Heart left ventricle (tissue), 16 donors: ENCODE measurements at regions of chr17 and their contacts with region 1.

Region 1: DNA sequence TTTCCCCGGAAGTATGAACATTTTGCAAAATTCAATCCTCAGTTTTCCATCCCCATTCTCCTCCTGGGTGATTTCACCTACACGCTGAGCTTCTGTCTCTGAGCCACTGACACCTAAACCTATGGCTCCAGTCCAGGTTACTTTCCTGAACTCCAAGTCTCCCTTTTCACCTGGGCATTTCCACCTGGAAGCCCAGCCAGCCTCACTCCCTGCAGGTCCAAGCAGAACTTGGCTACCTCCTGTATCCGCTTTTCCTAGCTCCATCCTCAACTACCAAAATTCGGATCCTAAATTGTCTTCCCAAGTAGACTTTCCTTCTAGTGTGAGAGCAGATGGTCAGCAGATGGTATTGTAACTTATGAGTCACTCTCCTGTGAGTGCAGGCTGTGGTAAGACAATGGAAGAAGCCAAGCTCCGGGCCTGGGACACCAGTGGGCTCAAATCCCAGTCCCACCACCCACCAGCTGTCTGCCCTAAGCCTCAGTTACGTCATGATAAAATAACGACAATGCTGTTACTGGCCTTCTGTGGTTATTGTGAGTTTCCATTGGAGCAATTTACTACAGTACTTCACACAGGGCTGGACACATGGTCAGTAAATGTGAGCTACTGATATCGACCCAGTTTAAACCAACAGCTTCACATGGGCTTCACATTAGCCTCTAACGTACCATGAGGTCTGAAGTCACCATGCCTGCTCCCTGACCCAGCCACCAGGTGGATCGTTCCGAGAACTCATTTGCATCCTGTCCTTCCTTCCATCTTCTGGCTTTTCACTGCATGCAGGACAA is 33.3 kb downstream of the PECAM1 start:
- DNase-seq: peak; percentile 69 to 77 (median 75)
- ATAC-seq: peak; percentile 82 to 94 (median 87)
- H3K4me3 ChIP-seq: no peak overlapping the region
- H3K27ac ChIP-seq: peak overlapping the region; percentile 46 to 85 (median 67)
- H3K4me1 ChIP-seq: peaks cover 0 to 70% (median 48%) of the 10 kb centered on the region in 12 donors
- H3K27me3 ChIP-seq: no peaks in the 10 kb centered on the region
- CTCF ChIP-seq: no peak
- POLR2A ChIP-seq: no peak

Region 2: GRCh38 chr17:64320613-64321553 is 36.5 kb before region 1 on chr17:
- intact Hi-C with region 1: loop called in 2 of 10 experiments (anchors 5 kb)
- DNase-seq: peak in 4 of 5 donors; percentile 59 to 78 (median 70)
- ATAC-seq: peak; percentile 44 to 86 (median 74)
- H3K4me3 ChIP-seq: peak overlapping the region in 1 of 12 donors; percentile 1
- H3K27ac ChIP-seq: peak overlapping the region in 10 of 12 donors; percentile 2 to 63 (median 36)
- H3K4me1 ChIP-seq: peaks cover 0 to 60% (median 19%) of the 10 kb centered on the region in 12 donors
- H3K27me3 ChIP-seq: no peaks in the 10 kb centered on the region
- CTCF ChIP-seq: peak; percentile 69 to 83 (median 77)
- POLR2A ChIP-seq: no peak

Region 3: DNA sequence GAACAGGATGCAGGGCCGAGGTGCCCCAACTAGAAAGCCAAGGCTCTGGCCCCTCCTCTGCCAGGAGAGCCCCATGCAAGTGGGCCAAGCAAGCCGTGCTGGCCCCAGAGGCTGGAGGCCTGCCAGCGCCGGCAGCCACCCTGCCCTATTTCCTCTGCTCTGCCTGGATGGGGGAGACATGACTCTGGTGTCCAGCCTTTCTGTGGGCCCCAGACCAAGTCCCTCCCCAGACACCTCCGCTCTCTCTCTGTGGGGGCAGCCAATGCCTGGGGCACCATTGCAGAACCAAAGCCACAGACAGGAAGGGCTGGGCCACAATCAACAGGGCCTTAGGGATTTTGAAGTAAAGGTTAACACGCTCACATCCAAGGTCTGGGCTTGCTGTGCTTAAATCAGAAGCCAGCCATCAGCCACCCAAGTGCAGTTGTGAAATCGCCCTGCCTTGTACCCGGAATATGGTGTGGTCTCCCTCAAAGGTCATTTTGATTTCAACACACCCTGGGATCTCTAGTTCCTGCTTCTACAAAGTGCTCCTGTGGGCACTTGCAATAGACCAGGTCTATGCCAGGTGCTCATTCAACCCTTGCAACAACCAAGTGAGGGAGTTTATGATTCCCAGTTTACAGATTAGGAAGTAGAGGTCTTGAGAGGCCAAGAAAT is 30.9 kb before region 1 on chr17:
- intact Hi-C with region 1: loop called in 2 of 10 experiments (anchors 5 kb)
- DNase-seq: peak; percentile 80 to 93 (median 89)
- ATAC-seq: peak; percentile 67 to 91 (median 81)
- H3K4me3 ChIP-seq: no peak overlapping the region
- H3K27ac ChIP-seq: peak overlapping the region; percentile 72 to 91 (median 85)
- H3K4me1 ChIP-seq: peaks cover 5 to 84% (median 51%) of the 10 kb centered on the region in 12 donors
- H3K27me3 ChIP-seq: no peaks in the 10 kb centered on the region
- CTCF ChIP-seq: no peak
- POLR2A ChIP-seq: peak in 1 of 2 donors; percentile 24

Region 4: GRCh38 chr17:64385187-64386083 is 28.0 kb after region 1 on chr17:
- intact Hi-C with region 1: loop called in 1 of 10 experiments (anchors 1 kb)
- DNase-seq: peak; percentile 49 to 81 (median 58)
- ATAC-seq: peak; percentile 66 to 86 (median 84)
- H3K4me3 ChIP-seq: peak overlapping the region in 10 of 12 donors; percentile 3 to 63 (median 53)
- H3K27ac ChIP-seq: peak overlapping the region; percentile 3 to 95 (median 86)
- H3K4me1 ChIP-seq: peaks cover 0 to 94% (median 33%) of the 10 kb centered on the region in 12 donors
- H3K27me3 ChIP-seq: no peaks in the 10 kb centered on the region
- CTCF ChIP-seq: no peak
- POLR2A ChIP-seq: no peak

Region 5: DNA sequence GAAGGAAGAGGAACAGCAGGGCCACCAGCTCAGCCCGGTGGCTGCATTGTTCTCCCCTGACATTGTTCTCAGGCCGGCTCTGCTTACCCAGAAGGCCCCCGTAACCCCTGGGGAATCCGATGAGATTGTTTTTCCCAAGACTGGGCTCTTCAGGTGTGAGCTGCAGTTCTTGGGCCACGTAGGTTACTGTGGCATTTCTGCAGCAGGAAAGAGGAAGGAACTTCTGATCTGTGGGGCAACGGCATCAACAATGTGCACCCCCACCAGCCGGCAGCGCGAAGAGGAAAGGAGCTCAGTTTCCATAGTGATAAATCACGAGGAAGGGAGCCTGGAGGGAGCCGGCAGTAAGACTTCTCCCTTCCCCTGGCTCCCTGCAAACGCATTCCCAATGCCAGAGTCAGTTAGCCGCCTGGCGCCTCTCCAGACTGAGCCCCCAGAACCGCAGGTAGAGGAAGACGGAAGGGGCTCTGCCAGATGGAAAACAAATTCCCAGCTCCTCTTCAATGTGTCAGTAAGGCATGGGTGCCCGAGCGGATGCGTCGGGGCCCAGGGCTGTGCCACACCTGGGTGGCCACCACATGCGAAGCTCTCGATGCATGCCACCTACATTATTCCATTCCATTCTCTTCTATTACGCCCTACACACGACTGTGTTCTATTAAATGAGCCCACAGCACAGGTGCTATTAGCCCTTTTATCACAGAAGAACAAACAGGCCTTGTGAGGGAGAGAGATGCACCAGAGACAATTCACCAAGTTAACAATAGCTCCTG is 54.8 kb after region 1 on chr17:
- intact Hi-C with region 1: loop called in 1 of 10 experiments (anchors 5 kb)
- DNase-seq: peak; percentile 69 to 78 (median 72)
- ATAC-seq: peak; percentile 47 to 88 (median 73)
- H3K4me3 ChIP-seq: peak overlapping the region in 9 of 12 donors; percentile 1 to 53 (median 22)
- H3K27ac ChIP-seq: peak overlapping the region in 10 of 12 donors; percentile 40 to 89 (median 70)
- H3K4me1 ChIP-seq: peaks cover 0 to 36% (median 14%) of the 10 kb centered on the region in 12 donors
- H3K27me3 ChIP-seq: no peaks in the 10 kb centered on the region
- CTCF ChIP-seq: no peak
- POLR2A ChIP-seq: no peak